ENCODE measurements at regions of chr3 and their contacts with region 1.

Region 1: GRCh38 chr3:72996473-72997333 is at the start of gene PPP4R2:
- DNase-seq: peak; percentile 55
- ATAC-seq: peak; percentile 90
- H3K4me3 ChIP-seq: peak within 1 kb of the TSS; percentile 96
- H3K27ac ChIP-seq: peak within 1 kb of the TSS; percentile 90
- H3K4me1 ChIP-seq: peaks cover 4% of the 10 kb centered on the region
- H3K27me3 ChIP-seq: no peaks in the 10 kb centered on the region
- CTCF ChIP-seq: no peak
- EP300 ChIP-seq: no peak
- POLR2A ChIP-seq: peak; percentile 97
- RAD21 ChIP-seq: no peak
- polyA plus RNA-seq, gene PPP4R2: 16.7 to 22.1 TPM

Region 2: GRCh38 chr3:72847751-72848702 is 148.7 kb before region 1 on chr3 and contains the start of gene SHQ1:
- CTCF ChIA-PET with region 1: interaction called, 10 read pairs
- POLR2A ChIA-PET with region 1: interaction called, 3 read pairs
- RAD21 ChIA-PET with region 1: interaction called, 5 read pairs
- SMC1A ChIA-PET with region 1: interaction called, 12 read pairs
- in situ Hi-C with region 1: no loop called
- intact Hi-C with region 1: loop called (anchors 2 kb)
- DNase-seq: peak; percentile 81
- ATAC-seq: peak; percentile 88
- H3K4me3 ChIP-seq: peak within 1 kb of the TSS; percentile 97
- H3K27ac ChIP-seq: peak within 1 kb of the TSS; percentile 79
- H3K4me1 ChIP-seq: peaks cover 35% of the 10 kb centered on the region
- H3K27me3 ChIP-seq: no peaks in the 10 kb centered on the region
- CTCF ChIP-seq: no peak
- EP300 ChIP-seq: no peak
- POLR2A ChIP-seq: peak; percentile 88
- RAD21 ChIP-seq: no peak
- polyA plus RNA-seq, gene SHQ1: 12.6 to 12.8 TPM

Region 3: DNA sequence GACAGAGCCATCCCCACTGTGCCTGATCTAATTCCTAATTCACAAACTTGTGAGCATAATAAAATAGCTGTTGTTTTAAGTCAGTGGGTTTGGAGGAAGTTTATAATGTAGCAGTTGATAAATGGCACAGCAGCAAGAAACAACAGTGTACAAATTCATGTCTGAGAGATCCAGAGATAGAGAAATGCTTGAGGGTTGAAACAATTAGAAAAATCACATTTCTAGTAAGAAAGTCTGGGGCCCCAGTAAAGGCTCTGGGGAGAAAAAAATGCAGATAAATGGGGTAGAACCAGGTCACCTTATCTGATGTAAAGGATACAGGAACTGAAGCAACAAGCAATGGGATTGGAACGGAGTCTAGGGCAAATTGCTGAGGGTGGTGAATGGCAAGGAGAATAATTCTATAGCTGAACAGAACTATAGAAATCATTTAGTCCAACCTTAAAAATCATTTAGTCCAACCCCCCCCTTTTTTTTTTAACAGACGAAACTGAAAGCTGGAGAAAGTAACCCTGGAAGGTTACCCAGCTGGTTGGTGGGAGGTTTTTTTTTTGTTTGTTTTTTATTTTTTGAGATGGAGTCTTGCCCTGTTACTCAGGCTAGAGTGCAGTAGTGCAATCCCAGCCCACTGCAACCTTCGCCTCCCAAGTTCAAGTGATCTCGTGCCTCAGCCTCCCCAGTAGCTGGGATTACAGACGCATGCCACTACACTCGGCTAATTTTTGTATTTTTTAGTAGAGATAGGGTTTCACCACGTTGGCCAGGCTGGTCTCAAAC is 134.2 kb before region 1 on chr3:
- CTCF ChIA-PET with region 1: no interaction called
- POLR2A ChIA-PET with region 1: no interaction called
- RAD21 ChIA-PET with region 1: no interaction called
- SMC1A ChIA-PET with region 1: no interaction called
- in situ Hi-C with region 1: no loop called
- intact Hi-C with region 1: no loop called
- DNase-seq: no peak
- ATAC-seq: no peak
- H3K4me3 ChIP-seq: no peak overlapping the region
- H3K27ac ChIP-seq: no peak overlapping the region
- H3K4me1 ChIP-seq: no peaks in the 10 kb centered on the region
- H3K27me3 ChIP-seq: no peaks in the 10 kb centered on the region; a peak in 1 of 4 replicates
- CTCF ChIP-seq: no peak
- EP300 ChIP-seq: no peak
- POLR2A ChIP-seq: no peak
- RAD21 ChIP-seq: no peak

Region 4: GRCh38 chr3:72938471-72939265 is 58.0 kb before region 1 on chr3:
- CTCF ChIA-PET with region 1: interaction called, 47 read pairs
- POLR2A ChIA-PET with region 1: no interaction called
- RAD21 ChIA-PET with region 1: interaction called, 31 read pairs
- SMC1A ChIA-PET with region 1: interaction called, 31 read pairs
- in situ Hi-C with region 1: no loop called
- intact Hi-C with region 1: loop called (anchors 5 kb)
- DNase-seq: no peak
- ATAC-seq: peak; percentile 98
- H3K4me3 ChIP-seq: no peak overlapping the region
- H3K27ac ChIP-seq: no peak overlapping the region
- H3K4me1 ChIP-seq: no peaks in the 10 kb centered on the region
- H3K27me3 ChIP-seq: no peaks in the 10 kb centered on the region
- CTCF ChIP-seq: peak; percentile 39 to 51 (median 41); a peak in 4 of 6 replicates
- EP300 ChIP-seq: no peak
- POLR2A ChIP-seq: no peak
- RAD21 ChIP-seq: peak; percentile 67

Region 5: DNA sequence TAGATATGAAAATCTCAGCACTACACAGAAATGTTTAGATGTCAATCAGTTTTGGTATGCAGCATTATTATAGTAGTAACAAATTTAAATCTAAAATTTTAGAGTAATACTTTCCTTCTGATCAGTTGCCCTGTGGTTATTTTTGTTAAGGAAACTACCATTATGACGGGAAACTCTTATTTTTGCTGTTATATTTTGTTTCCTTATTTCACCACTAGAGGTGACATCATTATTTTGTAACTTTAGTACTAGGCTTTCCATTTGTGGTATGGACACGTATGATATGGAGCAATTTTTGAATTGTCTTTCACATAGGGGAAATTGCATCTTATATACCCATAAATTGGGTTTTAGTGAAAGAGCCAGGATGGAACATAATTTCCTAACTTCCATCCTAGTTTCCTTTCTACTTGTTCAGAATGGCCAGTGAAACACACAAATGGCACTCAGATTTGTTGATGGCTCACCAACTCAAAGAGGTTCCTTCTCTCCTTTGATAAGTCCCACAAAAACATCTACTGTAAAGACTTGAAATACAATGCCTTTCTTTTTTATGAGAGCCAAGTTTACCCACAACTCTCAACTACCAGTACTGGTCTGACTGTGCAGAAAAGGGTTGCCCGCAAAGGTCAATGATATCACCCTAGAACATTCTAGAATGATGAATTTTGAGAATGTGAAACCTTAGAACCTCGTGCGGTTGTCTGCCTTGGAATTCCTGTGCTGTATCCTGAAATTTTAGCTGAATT is 19.5 kb before region 1 on chr3:
- CTCF ChIA-PET with region 1: interaction called, 8 read pairs
- POLR2A ChIA-PET with region 1: interaction called, 9 read pairs
- RAD21 ChIA-PET with region 1: interaction called, 5 read pairs
- SMC1A ChIA-PET with region 1: interaction called, 13 read pairs
- in situ Hi-C with region 1: no loop called
- intact Hi-C with region 1: loop called (anchors 2 kb)
- DNase-seq: no peak
- ATAC-seq: peak; percentile 92
- H3K4me3 ChIP-seq: no peak overlapping the region
- H3K27ac ChIP-seq: no peak overlapping the region
- H3K4me1 ChIP-seq: peaks cover 25% of the 10 kb centered on the region
- H3K27me3 ChIP-seq: no peaks in the 10 kb centered on the region
- CTCF ChIP-seq: peak in 2 of 3 experiments; percentile 6 to 17; a peak in 2 of 6 replicates
- EP300 ChIP-seq: peak in 1 of 2 experiments; percentile 66; a peak in 1 of 4 replicates
- POLR2A ChIP-seq: no peak
- RAD21 ChIP-seq: no peak

Region 6: GRCh38 chr3:73007992-73008712 is 11.4 kb after region 1 on chr3:
- CTCF ChIA-PET with region 1: interaction called, 25 read pairs
- POLR2A ChIA-PET with region 1: interaction called, 3 read pairs
- RAD21 ChIA-PET with region 1: no interaction called
- SMC1A ChIA-PET with region 1: interaction called, 10 read pairs
- in situ Hi-C with region 1: no loop called
- intact Hi-C with region 1: no loop called
- DNase-seq: no peak
- ATAC-seq: no peak
- H3K4me3 ChIP-seq: no peak overlapping the region
- H3K27ac ChIP-seq: no peak overlapping the region
- H3K4me1 ChIP-seq: no peaks in the 10 kb centered on the region
- H3K27me3 ChIP-seq: no peaks in the 10 kb centered on the region
- CTCF ChIP-seq: no peak
- EP300 ChIP-seq: no peak
- POLR2A ChIP-seq: no peak
- RAD21 ChIP-seq: no peak

Region 7: DNA sequence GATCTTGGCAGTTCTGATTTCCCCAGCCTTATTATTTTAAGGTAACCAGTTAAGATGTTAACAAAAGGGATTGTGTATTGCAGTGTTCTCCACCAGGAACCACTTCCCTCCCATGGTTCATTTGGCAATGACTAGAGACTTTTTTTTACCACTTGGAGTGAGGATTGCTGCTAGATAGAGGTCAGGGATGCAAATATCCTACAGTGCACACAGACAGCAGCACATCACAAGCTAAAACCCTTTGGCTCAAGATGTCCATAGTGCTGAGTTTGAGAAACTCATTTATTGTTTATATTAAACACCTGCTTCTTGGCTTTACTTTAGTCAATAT is 40.6 kb after region 1 on chr3:
- CTCF ChIA-PET with region 1: interaction called, 3 read pairs
- POLR2A ChIA-PET with region 1: no interaction called
- RAD21 ChIA-PET with region 1: no interaction called
- SMC1A ChIA-PET with region 1: interaction called, 7 read pairs
- in situ Hi-C with region 1: no loop called
- intact Hi-C with region 1: loop called (anchors 5 kb)
- DNase-seq: no peak
- ATAC-seq: peak; percentile 48
- H3K4me3 ChIP-seq: no peak overlapping the region
- H3K27ac ChIP-seq: 0 out of 2 replicates have a peak overlapping the region, but pooled peaks have one; percentile 39
- H3K4me1 ChIP-seq: peaks cover 20% of the 10 kb centered on the region
- H3K27me3 ChIP-seq: no peaks in the 10 kb centered on the region
- CTCF ChIP-seq: no peak
- EP300 ChIP-seq: no peak
- POLR2A ChIP-seq: no peak
- RAD21 ChIP-seq: no peak

Region 8: DNA sequence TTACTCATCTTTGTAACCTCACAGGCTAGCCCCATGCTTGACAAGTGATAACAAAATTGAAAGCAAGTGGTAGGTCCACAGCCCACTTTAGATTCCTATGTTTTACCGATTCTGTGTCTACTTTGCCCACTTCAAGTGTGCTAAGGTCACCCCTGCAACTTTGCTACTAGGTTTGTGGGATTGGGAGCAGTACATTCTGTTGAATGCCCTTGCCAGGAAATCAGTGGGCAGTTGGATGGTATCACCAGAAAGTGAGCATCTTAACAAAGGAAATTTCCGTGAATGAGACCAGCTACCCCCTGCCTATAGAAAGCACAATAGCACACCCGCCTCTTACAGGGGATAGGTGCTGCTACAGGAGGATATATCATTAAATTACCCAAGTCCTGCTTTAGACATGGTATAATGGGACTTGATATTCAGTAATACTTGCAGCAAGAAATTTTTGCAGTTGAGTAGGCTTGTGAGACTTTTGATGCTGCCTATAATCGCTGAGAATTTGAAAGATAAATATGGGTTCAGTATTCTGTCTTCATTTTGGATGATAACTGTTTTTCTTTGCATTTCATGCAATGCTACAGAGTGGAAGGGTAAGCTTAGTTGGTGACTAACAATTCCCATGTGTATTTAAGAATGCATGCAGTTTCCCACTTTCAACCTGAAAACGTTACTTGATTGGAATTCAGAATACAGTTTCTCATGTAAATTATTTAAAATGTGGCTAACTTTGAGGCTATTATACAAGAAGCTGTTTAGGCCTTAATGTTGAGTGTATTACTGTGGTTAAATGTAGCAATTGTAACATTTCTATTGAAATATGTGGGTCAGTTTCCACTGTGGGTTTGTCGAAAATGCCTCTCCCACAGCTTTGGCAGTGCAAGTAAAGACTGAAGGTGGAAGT is 74.2 kb after region 1 on chr3:
- CTCF ChIA-PET with region 1: interaction called, 3 read pairs
- POLR2A ChIA-PET with region 1: no interaction called
- RAD21 ChIA-PET with region 1: no interaction called
- SMC1A ChIA-PET with region 1: interaction called, 10 read pairs
- in situ Hi-C with region 1: no loop called
- intact Hi-C with region 1: no loop called
- DNase-seq: no peak
- ATAC-seq: no peak
- H3K4me3 ChIP-seq: no peak overlapping the region
- H3K27ac ChIP-seq: no peak overlapping the region
- H3K4me1 ChIP-seq: no peaks in the 10 kb centered on the region
- H3K27me3 ChIP-seq: no peaks in the 10 kb centered on the region
- CTCF ChIP-seq: no peak
- EP300 ChIP-seq: no peak
- POLR2A ChIP-seq: no peak
- RAD21 ChIP-seq: no peak

Region 9: DNA sequence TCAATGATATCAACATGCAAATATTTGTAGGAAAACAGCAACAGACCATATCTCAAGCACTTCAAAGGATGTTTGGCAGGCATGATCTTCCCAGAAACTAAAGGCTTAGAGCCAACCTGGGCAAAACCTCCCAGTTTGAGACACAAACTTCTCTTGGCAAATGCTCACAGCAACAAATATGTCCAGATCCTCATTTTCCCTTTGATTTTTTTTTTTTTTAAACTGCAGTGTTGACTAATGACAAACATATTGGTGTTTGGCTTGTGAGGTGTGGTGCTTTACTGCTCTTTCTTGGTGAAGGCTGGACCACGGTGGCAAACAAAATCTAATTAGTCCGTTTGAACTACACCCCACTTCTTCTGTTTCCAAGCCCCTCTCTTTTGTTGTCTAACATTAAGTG is 152.0 kb after region 1 on chr3:
- CTCF ChIA-PET with region 1: no interaction called
- POLR2A ChIA-PET with region 1: no interaction called
- RAD21 ChIA-PET with region 1: no interaction called
- SMC1A ChIA-PET with region 1: no interaction called
- in situ Hi-C with region 1: no loop called
- intact Hi-C with region 1: no loop called
- DNase-seq: no peak
- ATAC-seq: no peak
- H3K4me3 ChIP-seq: no peak overlapping the region
- H3K27ac ChIP-seq: no peak overlapping the region
- H3K4me1 ChIP-seq: no peaks in the 10 kb centered on the region
- H3K27me3 ChIP-seq: no peaks in the 10 kb centered on the region; a peak in 1 of 4 replicates
- CTCF ChIP-seq: no peak
- EP300 ChIP-seq: no peak
- POLR2A ChIP-seq: no peak
- RAD21 ChIP-seq: no peak

Region 10: GRCh38 chr3:73332558-73332957 is 335.9 kb after region 1 on chr3:
- CTCF ChIA-PET with region 1: no interaction called
- POLR2A ChIA-PET with region 1: no interaction called
- RAD21 ChIA-PET with region 1: no interaction called
- SMC1A ChIA-PET with region 1: no interaction called
- in situ Hi-C with region 1: no loop called
- intact Hi-C with region 1: no loop called
- DNase-seq: no peak
- ATAC-seq: no peak
- H3K4me3 ChIP-seq: no peak overlapping the region
- H3K27ac ChIP-seq: no peak overlapping the region
- H3K4me1 ChIP-seq: no peaks in the 10 kb centered on the region
- H3K27me3 ChIP-seq: no peaks in the 10 kb centered on the region
- CTCF ChIP-seq: no peak
- EP300 ChIP-seq: no peak
- POLR2A ChIP-seq: no peak
- RAD21 ChIP-seq: no peak